ENCODE measurements at regions of chr19 and their contacts with region 1.

Region 1: DNA sequence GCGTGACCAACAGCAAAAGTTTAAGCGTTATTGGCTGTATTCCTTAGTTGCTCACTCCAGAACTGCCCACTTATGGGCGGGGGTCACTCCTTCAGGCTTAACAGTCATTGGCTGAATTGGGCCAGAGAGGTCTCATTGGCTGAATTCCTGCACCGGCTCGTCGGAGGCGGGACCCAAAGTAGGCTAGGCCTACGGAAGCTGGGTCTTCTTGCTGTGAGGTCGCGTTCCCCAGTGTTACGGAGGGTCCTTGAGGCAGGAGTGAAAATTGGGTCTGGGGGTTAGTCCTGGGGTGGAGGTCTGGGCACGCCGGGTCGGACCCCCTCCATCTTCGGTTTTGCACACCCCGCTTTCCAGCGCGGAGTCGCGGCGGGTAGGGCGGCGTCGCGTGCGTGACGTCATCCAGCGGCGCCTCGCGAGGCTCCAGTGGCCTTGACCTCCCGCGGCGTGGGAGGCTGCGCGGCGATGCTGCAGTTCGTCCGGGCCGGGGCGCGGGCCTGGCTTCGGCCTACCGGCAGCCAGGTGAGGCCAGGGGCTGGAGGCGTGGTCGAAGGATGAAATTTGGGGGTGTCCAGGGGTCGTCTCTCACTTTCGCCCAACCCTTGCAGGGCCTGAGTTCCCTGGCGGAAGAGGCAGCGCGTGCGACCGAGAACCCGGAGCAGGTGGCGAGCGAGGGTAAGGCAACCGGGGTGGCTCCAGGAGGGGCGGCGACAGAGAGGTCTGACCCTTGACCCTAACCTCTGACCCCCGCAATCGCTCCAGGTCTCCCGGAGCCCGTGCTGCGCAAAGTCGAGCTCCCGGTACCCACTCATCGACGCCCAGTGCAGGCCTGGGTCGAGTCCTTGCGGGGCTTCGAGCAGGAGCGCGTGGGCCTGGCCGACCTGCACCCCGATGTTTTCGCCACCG is at the start of gene MRPL4:
- DNase-seq: peak; percentile 85 to 97
- H3K4me3 ChIP-seq: peak within 1 kb of the TSS; percentile 74 to 100 (median 91)
- H3K27ac ChIP-seq: peak within 1 kb of the TSS; percentile 90
- H3K4me1 ChIP-seq: peaks cover 0 to 4% (median 1%) of the 10 kb centered on the region in 4 experiments; a peak in 1 of 7 replicates
- H3K27me3 ChIP-seq: no peaks in the 10 kb centered on the region
- CTCF ChIP-seq: no peak
- EP300 ChIP-seq: no peak
- POLR2A ChIP-seq: peak; percentile 32 to 79
- RAD21 ChIP-seq: no peak
- total RNA-seq, gene MRPL4: 82.3 and 90.7 TPM in 2 replicates

Region 2: DNA sequence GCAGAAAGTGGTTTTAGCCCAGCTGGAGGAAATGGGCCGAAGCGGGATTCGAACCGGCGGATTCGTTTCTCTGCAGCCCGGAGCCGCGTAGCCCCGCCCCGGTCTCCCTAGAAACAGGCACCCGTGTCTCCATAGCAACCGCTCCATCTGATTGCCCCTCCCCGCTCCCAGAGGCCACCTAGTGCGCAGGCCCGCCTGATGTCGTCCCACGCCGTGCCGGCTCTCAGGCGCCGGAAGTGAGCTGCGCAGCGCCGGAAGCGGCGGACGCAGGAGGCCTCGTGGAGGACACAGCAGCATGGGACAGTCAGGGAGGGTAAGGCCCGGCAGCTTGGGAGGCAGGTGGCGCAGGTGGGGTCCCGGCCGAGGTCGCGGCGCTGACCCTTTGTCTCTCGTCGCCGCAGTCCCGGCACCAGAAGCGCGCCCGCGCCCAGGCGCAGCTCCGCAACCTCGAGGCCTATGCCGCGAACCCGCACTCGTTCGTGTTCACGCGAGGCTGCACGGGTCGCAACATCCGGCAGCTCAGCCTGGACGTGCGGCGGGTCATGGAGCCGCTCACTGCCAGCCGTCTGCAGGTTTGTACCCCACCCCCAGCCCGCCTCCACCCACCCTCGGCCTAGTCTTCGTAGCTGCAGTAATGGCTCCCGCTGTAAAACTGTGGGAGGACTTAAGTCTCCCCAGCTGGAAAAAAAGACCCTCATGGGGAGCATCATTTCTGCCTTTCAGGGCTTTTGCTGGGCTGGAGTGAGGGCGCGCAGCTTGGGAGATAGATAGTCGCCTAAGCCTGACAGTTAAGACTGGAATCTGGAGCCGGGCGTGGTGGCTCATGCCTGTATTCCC is 145.7 kb before region 1 on chr19 and contains the start of gene PPAN:
- CTCF ChIA-PET with region 1: no interaction called
- POLR2A ChIA-PET with region 1: no interaction called
- DNase-seq: peak; percentile 90 to 97
- H3K4me3 ChIP-seq: peak within 1 kb of the TSS; percentile 78 to 95 (median 93)
- H3K27ac ChIP-seq: peak within 1 kb of the TSS; percentile 92
- H3K4me1 ChIP-seq: peaks cover 0 to 4% (median 3%) of the 10 kb centered on the region in 4 experiments; a peak in 5 of 7 replicates
- H3K27me3 ChIP-seq: no peaks in the 10 kb centered on the region
- CTCF ChIP-seq: peak in 1 of 3 experiments; percentile 13; a peak in 1 of 4 replicates
- EP300 ChIP-seq: no peak
- POLR2A ChIP-seq: peak in 1 of 2 experiments; percentile 95; a peak in 2 of 3 replicates
- RAD21 ChIP-seq: no peak
- total RNA-seq, gene PPAN: 72.6 and 74.4 TPM in 2 replicates

Region 3: GRCh38 chr19:10173257-10173926 is 78.7 kb before region 1 on chr19:
- CTCF ChIA-PET with region 1: interaction called, 13 read pairs
- POLR2A ChIA-PET with region 1: interaction called, 3 read pairs
- DNase-seq: no peak
- H3K4me3 ChIP-seq: no peak overlapping the region
- H3K27ac ChIP-seq: no peak overlapping the region
- H3K4me1 ChIP-seq: no peaks in the 10 kb centered on the region
- H3K27me3 ChIP-seq: no peaks in the 10 kb centered on the region
- CTCF ChIP-seq: no peak
- EP300 ChIP-seq: no peak
- POLR2A ChIP-seq: no peak
- RAD21 ChIP-seq: no peak

Region 4: DNA sequence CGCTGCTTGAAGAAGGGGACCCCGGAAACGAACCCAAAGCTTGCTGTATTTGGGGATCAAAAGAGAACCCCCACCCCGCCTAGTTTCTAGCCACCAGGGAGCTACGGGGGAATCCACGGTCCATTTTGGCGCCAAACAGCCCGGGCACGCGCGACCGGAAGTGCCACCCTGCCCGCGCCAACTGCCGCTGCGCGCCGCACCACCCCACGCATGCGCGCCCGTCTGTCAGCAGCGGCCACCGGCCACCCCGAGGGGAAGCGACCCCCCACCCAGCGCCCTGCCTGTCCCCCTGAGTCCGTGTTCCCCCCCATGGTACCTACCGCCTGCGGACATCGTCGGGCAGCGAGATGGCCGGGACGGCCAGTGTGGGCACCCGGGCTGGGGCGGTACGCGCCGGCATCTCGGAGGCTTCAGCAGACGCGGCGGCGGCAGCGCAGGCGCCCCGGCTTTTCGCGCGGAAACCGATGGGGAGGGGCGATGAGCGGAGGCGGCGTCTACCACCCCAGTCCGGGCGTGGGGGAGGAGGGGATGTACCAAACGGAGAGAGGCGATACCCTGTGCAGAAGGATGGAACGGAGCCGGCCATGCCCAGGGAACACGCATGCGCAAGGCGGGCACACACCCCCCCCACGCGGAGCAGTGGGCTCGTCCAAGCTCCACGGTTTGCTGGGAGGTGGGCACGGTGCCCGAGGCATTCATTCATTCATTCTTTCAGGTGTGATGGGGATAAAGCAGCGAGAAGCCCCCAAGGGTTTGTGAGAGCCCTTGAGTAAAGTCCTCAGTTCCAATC is 57.3 kb before region 1 on chr19 and contains the start of gene DNMT1:
- CTCF ChIA-PET with region 1: interaction called, 9 read pairs
- POLR2A ChIA-PET with region 1: interaction called, 14 read pairs
- DNase-seq: peak; percentile 85 to 99
- H3K4me3 ChIP-seq: peak within 1 kb of the TSS; percentile 64 to 92 (median 80)
- H3K27ac ChIP-seq: peak within 1 kb of the TSS; percentile 83
- H3K4me1 ChIP-seq: no peaks in the 10 kb centered on the region
- H3K27me3 ChIP-seq: no peaks in the 10 kb centered on the region
- CTCF ChIP-seq: no peak
- EP300 ChIP-seq: peak in 1 of 2 experiments; percentile 100; a peak in 2 of 3 replicates
- POLR2A ChIP-seq: peak; percentile 82 to 97
- RAD21 ChIP-seq: no peak; a peak in 1 of 4 replicates
- total RNA-seq, gene DNMT1: 208 and 210 TPM in 2 replicates

Region 5: GRCh38 chr19:10219678-10220077 is 32.4 kb before region 1 on chr19:
- CTCF ChIA-PET with region 1: interaction called, 57 read pairs
- POLR2A ChIA-PET with region 1: no interaction called
- DNase-seq: peak in 1 of 2 experiments; percentile 46
- H3K4me3 ChIP-seq: no peak overlapping the region; a peak in 1 of 8 replicates
- H3K27ac ChIP-seq: peak overlapping the region; percentile 29; the same call in 1 of the 2 replicates
- H3K4me1 ChIP-seq: peaks cover 0 to 2% (median 0%) of the 10 kb centered on the region in 4 experiments; a peak in 2 of 7 replicates
- H3K27me3 ChIP-seq: no peaks in the 10 kb centered on the region
- CTCF ChIP-seq: peak; percentile 24 to 64 (median 56)
- EP300 ChIP-seq: peak; percentile 54 to 80; a peak in 2 of 3 replicates
- POLR2A ChIP-seq: peak in 1 of 2 experiments; percentile 63; a peak in 1 of 3 replicates
- RAD21 ChIP-seq: peak; percentile 38 to 55

Region 6: GRCh38 chr19:10238172-10238783 is 13.8 kb before region 1 on chr19:
- CTCF ChIA-PET with region 1: interaction called, 14 read pairs
- POLR2A ChIA-PET with region 1: no interaction called
- DNase-seq: no peak
- H3K4me3 ChIP-seq: no peak overlapping the region
- H3K27ac ChIP-seq: no peak overlapping the region
- H3K4me1 ChIP-seq: peaks cover 0 to 7% (median 2%) of the 10 kb centered on the region in 4 experiments; a peak in 4 of 7 replicates
- H3K27me3 ChIP-seq: no peaks in the 10 kb centered on the region
- CTCF ChIP-seq: no peak
- EP300 ChIP-seq: no peak
- POLR2A ChIP-seq: no peak
- RAD21 ChIP-seq: no peak

Region 7: DNA sequence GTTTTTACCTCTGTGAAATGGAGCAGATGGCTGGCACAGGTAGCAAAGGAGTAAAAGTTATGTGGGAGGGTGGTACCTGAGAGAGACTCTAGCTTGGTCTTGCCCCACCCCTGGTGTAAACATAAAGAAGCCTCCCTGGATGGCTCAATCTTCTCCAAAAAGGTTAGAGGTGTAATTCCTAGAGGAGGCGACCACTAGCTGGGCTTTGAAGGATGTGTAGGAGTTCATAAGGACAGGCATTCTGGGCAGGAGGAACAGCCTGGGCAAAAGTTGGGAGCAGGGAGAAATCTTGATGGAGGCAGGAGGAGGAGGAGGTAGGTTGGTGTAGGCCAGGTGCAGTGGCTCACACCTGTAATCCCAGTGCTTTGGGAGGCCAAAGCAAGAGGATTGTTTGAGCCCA is 26.9 kb after region 1 on chr19:
- CTCF ChIA-PET with region 1: no interaction called
- POLR2A ChIA-PET with region 1: no interaction called
- DNase-seq: no peak
- H3K4me3 ChIP-seq: no peak overlapping the region
- H3K27ac ChIP-seq: no peak overlapping the region
- H3K4me1 ChIP-seq: peaks cover 0 to 5% (median 2%) of the 10 kb centered on the region in 4 experiments; a peak in 1 of 7 replicates
- H3K27me3 ChIP-seq: no peaks in the 10 kb centered on the region
- CTCF ChIP-seq: no peak
- EP300 ChIP-seq: no peak
- POLR2A ChIP-seq: no peak
- RAD21 ChIP-seq: no peak

Region 8: GRCh38 chr19:10327793-10328192 is 75.8 kb after region 1 on chr19:
- CTCF ChIA-PET with region 1: no interaction called
- POLR2A ChIA-PET with region 1: no interaction called
- DNase-seq: no peak
- H3K4me3 ChIP-seq: no peak overlapping the region
- H3K27ac ChIP-seq: no peak overlapping the region
- H3K4me1 ChIP-seq: peaks cover 0 to 4% (median 3%) of the 10 kb centered on the region in 4 experiments; a peak in 4 of 7 replicates
- H3K27me3 ChIP-seq: no peaks in the 10 kb centered on the region
- CTCF ChIP-seq: no peak
- EP300 ChIP-seq: no peak
- POLR2A ChIP-seq: no peak
- RAD21 ChIP-seq: no peak